Colonic mucosa (tissue), 4 donors: ENCODE measurements at regions of chr7 and their contacts with region 1.

Region 1: DNA sequence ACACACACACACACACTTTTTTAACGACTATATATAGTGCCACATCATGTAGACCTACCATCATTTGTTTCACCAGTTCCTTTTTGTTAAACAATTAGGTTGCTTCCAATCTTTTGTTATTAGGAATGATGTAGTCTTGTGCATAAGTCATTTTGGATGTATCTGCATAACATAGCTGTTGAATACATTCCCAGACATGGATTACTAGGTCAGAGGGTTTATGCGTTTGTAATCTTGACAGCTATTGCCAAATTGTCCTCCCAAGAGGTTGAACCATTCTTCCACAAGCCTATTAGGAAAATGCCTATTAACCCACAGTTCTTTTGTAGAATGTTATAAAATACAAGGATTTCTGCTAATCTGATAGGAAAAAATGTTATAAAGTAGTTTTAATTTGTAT is 87.3 kb downstream of the PALS2 start:
- DNase-seq: no peak
- H3K4me3 ChIP-seq: no peak overlapping the region
- H3K27ac ChIP-seq: no peak overlapping the region
- H3K4me1 ChIP-seq: no peaks in the 10 kb centered on the region
- H3K27me3 ChIP-seq: no peaks in the 10 kb centered on the region
- CTCF ChIP-seq: no peak

Region 2: GRCh38 chr7:24501009-24501408 is 159.5 kb before region 1 on chr7:
- intact Hi-C with region 1: no loop called
- DNase-seq: no peak
- H3K4me3 ChIP-seq: no peak overlapping the region
- H3K27ac ChIP-seq: no peak overlapping the region
- H3K4me1 ChIP-seq: no peaks in the 10 kb centered on the region
- H3K27me3 ChIP-seq: no peaks in the 10 kb centered on the region
- CTCF ChIP-seq: no peak

Region 3: DNA sequence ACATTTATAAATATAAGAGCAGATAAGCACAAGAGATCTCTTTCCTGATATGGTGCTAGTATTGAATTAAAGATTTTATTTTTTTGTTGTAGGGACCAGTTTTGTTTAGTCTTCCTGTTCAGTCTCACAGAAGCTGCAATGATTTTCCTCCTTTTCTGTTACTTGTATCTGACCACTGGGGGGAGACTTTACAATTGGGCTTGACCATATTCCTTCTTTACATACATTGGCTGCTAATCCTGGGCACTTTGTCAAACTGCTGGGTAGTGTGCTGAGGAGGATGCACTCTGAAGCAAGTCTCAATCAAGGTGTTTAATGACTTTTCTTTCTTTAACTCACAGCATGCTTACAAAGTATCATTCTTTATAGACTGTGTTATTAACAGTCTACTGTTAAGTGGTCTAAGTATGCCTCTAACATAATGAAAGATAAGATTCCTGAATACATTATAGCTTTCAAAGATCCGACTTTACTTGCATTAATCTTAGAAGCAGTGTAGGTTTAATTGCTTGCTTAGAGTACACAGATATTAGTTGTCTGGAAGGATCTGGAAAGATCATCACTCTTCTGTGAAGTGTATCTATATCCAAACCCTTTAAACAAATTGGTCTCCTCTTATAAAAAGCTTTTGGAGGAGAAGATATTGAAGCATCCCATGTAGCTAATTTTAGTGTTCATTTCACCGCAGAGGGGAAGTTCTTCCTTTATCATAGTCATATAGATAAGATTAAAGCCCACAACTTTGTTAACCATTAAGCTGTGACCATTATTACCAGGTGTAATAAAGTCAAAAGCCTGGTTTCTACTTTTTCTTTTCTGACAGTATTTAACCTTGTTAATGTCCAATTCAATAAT is 84.1 kb before region 1 on chr7:
- intact Hi-C with region 1: loop called (anchors 5 kb)
- DNase-seq: peak; percentile 34
- H3K4me3 ChIP-seq: no peak overlapping the region
- H3K27ac ChIP-seq: no peak overlapping the region
- H3K4me1 ChIP-seq: no peaks in the 10 kb centered on the region
- H3K27me3 ChIP-seq: no peaks in the 10 kb centered on the region
- CTCF ChIP-seq: peak; percentile 58